BJ (cell line): ENCODE measurements at regions of chr1 and their contacts with region 1.

Region 1: DNA sequence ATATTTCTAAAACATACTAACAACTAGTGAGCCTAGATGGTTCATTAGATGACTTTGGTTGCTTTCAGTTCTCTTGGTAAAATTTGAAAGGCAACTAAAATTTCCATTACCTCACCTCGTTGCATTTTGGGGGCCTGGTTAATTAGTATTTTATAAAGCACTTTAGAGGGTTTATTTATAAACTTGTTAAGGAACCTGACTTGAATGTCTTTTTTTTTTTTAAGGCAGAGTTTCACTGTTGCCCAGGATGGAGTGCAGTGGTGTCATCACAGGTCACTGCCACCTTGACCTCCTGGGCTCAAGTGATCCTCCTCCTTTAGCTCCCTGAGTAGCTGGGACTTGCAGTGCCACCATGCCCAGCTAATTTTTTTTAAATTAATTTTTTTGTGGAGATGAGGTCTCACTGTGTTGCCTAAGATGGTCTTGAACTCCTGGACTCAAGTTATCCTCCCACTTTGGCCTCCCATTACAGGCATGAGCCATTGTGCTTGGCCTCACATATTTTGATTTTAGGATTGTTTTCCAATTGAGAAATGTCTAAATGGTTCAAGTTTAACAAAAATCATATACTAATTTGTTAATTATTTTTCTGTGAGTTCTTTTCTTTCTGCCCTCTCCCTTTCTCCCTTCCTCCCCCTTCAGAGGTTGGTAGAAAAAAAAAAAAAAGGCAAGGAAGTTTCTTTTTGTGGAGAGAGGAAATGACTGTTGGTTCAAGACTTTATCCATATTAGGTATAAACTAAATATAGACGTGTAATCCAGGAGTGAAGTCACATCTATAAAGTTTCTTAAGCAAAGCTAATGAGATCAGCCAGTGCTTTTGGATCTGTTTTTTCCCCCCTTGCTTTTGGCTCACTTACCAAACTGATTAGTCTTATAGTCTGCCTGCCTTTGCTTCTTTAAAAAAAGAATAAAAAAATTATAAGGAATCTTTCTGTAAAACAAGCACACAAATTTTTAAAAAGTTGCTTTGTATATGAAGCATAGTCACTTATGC is 24.7 kb downstream of the CLIC4 start:
- DNase-seq: peak; percentile 92
- H3K4me3 ChIP-seq: no peak overlapping the region
- H3K27me3 ChIP-seq: no peaks in the 10 kb centered on the region
- CTCF ChIP-seq: no peak

Region 2: GRCh38 chr1:24454673-24455072 is 315.3 kb before region 1 on chr1:
- CTCF ChIA-PET with region 1: no interaction called
- POLR2A ChIA-PET with region 1: no interaction called
- DNase-seq: no peak
- H3K4me3 ChIP-seq: no peak overlapping the region
- H3K27me3 ChIP-seq: no peaks in the 10 kb centered on the region
- CTCF ChIP-seq: no peak

Region 3: DNA sequence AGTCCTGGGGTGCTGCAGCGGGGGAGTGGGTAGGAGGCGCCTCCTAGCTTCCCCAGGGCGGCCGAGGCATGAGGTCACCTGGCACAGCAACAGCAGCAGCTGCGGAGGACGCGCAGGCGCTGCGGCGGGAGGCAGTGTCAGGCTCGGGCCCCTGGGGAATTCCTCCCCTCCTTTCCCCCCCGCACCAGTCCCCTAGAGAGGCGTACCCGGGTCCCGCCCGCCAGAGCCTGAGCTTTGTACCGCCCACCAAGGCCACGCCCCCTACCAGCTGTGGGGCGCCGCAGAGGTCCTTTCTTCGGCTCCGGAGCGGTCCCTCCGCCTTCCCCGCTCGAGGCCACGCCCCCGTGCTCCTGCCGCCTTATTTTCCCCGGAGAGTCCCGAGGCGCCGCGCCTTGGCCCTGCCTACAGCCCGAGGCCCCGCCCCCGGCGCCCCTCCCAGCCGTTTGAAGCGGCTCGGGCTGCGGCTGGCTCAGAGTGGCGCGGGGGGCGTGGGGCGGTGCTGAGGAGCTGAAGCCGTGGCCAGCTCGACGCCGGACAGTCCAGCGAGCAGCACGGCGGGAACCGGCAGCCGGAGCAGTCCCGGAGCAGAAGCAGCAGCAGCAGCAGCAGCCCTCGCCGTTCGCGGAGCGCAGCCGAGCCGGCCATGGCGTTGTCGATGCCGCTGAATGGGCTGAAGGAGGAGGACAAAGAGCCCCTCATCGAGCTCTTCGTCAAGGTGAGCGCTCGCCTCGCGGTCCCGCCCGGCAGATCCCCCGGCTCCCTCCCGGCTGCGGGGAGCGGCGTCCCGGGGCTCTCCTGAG is 24.8 kb before region 1 on chr1 and contains the start of gene CLIC4:
- CTCF ChIA-PET with region 1: interaction called, 3 read pairs
- POLR2A ChIA-PET with region 1: interaction called, 19 read pairs
- DNase-seq: peak; percentile 94
- H3K4me3 ChIP-seq: peak within 1 kb of the TSS; percentile 92
- H3K27me3 ChIP-seq: no peaks in the 10 kb centered on the region
- CTCF ChIP-seq: peak; percentile 47
- polyA plus RNA-seq, gene CLIC4: 275 and 547 TPM in 2 replicates